Psoas muscle (tissue), 8 donors: ENCODE measurements at regions of chr2 and their contacts with region 1.

Region 1: GRCh38 chr2:70173520-70173919 is 17.3 kb downstream of the C2orf42 start:
- DNase-seq: no peak
- ATAC-seq: no peak
- H3K4me3 ChIP-seq: no peak overlapping the region
- H3K27ac ChIP-seq: no peak overlapping the region
- H3K4me1 ChIP-seq: no peaks in the 10 kb centered on the region
- H3K27me3 ChIP-seq: no peaks in the 10 kb centered on the region
- CTCF ChIP-seq: no peak

Region 2: DNA sequence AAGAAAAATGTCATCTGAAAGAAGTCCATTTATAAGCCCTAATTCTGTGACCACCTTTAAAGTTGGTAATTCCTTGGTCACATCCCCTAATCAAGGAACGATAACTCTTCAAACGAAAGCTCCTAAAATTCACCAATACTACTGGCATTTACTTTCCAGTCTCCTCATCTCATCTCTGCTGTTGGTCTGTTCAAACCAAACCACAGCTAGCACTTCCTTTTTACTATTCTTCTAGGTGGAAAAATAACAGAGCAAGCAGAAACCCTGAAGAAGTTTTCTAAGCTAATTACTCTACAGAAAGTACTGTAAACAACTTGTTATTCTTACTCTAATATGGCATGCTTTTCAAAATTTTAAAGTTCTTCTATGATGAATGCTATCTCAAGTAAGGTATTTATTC is 53.3 kb after region 1 on chr2:
- intact Hi-C with region 1: loop called in 1 of 2 experiments (anchors 10 kb)
- DNase-seq: no peak
- ATAC-seq: no peak
- H3K4me3 ChIP-seq: no peak overlapping the region
- H3K27ac ChIP-seq: no peak overlapping the region
- H3K4me1 ChIP-seq: no peaks in the 10 kb centered on the region
- H3K27me3 ChIP-seq: no peaks in the 10 kb centered on the region
- CTCF ChIP-seq: no peak